Heart right ventricle (tissue), 16 donors: ENCODE measurements at regions of chr9 and their contacts with region 1.

Region 1: DNA sequence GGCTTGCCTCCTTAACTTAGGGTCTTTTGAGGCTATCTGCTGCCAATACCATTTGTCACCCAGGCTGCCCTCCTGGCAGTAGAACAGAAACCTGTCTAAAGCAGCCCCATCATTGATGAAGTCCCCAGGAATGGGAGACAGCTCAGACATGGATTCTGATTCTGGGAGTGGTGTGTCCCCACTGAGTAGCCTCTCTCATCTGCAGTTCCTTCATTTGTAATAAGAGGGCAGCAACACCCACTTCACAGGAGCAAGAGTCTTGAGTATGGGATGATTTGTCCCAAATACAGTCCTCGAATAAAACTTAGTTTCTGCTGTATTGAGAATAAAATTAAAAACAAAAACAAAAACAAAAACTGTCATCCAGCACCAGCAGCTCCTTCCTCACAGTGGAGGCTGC is 167.6 kb downstream of the ASTN2 start:
- DNase-seq: no peak
- ATAC-seq: no peak
- H3K4me3 ChIP-seq: no peak overlapping the region
- H3K27ac ChIP-seq: no peak overlapping the region
- H3K4me1 ChIP-seq: no peaks in the 10 kb centered on the region
- H3K27me3 ChIP-seq: no peaks in the 10 kb centered on the region
- CTCF ChIP-seq: peak in 7 of 9 donors; percentile 35 to 58 (median 40)

Region 2: GRCh38 chr9:117060963-117061362 is 186.3 kb before region 1 on chr9:
- intact Hi-C with region 1: no loop called
- DNase-seq: no peak
- ATAC-seq: no peak
- H3K4me3 ChIP-seq: no peak overlapping the region
- H3K27ac ChIP-seq: no peak overlapping the region
- H3K4me1 ChIP-seq: peaks cover 0 to 9% (median 0%) of the 10 kb centered on the region in 9 donors
- H3K27me3 ChIP-seq: no peaks in the 10 kb centered on the region
- CTCF ChIP-seq: no peak

Region 3: DNA sequence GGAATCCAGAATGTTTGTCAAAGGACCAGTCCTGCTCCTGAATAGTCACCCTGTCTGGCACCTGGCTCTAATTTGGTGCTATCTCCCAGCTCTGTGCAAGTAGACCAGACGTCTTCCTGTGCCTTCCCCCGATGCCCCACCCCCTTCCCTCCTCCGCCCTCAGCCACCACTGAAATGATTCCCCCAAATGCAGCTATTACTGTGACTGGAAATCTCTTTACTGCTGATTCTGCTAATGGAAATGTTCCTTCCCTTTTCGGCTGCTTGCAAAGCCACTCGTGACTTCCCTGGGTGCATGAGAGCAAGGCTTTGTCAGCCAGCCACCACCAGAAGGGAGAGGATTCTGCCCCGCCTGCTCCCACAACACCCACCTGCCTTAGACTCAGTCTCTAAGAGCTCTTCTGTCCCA is 156.1 kb after region 1 on chr9:
- intact Hi-C with region 1: loop called in 2 of 10 experiments (anchors 5 to 10 kb)
- DNase-seq: no peak
- ATAC-seq: peak in 1 of 8 donors; percentile 33
- H3K4me3 ChIP-seq: no peak overlapping the region
- H3K27ac ChIP-seq: no peak overlapping the region
- H3K4me1 ChIP-seq: no peaks in the 10 kb centered on the region
- H3K27me3 ChIP-seq: peaks cover 0 to 57% (median 15%) of the 10 kb centered on the region in 7 donors
- CTCF ChIP-seq: no peak

Region 4: GRCh38 chr9:117411548-117411947 is 164.3 kb after region 1 on chr9:
- intact Hi-C with region 1: loop called in 4 of 10 experiments (anchors 5 to 10 kb)
- DNase-seq: peak in 1 of 2 donors; percentile 28
- ATAC-seq: peak in 4 of 8 donors; percentile 36 to 61 (median 53)
- H3K4me3 ChIP-seq: no peak overlapping the region
- H3K27ac ChIP-seq: no peak overlapping the region
- H3K4me1 ChIP-seq: peaks cover 0 to 26% (median 11%) of the 10 kb centered on the region in 9 donors
- H3K27me3 ChIP-seq: peaks cover 13 to 79% (median 57%) of the 10 kb centered on the region in 7 donors
- CTCF ChIP-seq: peak; percentile 10 to 63 (median 53)

Region 5: DNA sequence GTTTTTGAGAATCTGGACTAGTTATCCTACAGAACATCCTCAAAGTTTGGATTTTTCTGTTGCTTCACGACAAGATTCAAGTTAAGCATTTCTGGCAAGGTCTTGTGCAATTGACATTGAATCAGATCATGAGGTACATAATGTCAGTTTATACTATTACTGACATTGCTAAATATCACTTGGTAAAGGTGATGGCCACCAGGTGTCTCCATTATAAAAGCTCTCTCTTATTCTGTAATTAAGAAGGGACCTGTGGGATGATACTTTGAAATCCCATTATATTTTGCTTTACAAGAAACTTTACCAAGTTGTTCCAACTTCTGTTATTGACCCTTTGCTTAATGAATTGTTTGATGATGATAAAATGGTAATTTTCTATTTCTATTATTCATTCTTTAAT is 298.6 kb after region 1 on chr9:
- intact Hi-C with region 1: no loop called
- DNase-seq: no peak
- ATAC-seq: no peak
- H3K4me3 ChIP-seq: no peak overlapping the region
- H3K27ac ChIP-seq: no peak overlapping the region
- H3K4me1 ChIP-seq: peaks cover 0 to 5% (median 0%) of the 10 kb centered on the region in 9 donors
- H3K27me3 ChIP-seq: peaks cover 0 to 7% (median 0%) of the 10 kb centered on the region in 7 donors
- CTCF ChIP-seq: no peak